Activated naive CD4-positive, alpha-beta T cell treated with anti-CD3 and anti-CD28 coated beads for 36 hours (primary cell): ENCODE measurements at regions of chr13 and their contacts with region 1.

Region 1: GRCh38 chr13:94710881-94711560 is 1.3 kb downstream of the SOX21 start:
- DNase-seq: peak; percentile 22
- H3K4me3 Mint-ChIP-seq: peak overlapping the region; percentile 48
- H3K27ac Mint-ChIP-seq: no peak overlapping the region
- H3K4me1 Mint-ChIP-seq: peaks cover 24% of the 10 kb centered on the region
- H3K27me3 Mint-ChIP-seq: peaks cover 72% of the 10 kb centered on the region

Region 2: GRCh38 chr13:94608586-94608985 is 102.4 kb before region 1 on chr13:
- CTCF ChIA-PET with region 1: no interaction called
- intact Hi-C with region 1: no loop called
- DNase-seq: no peak
- H3K4me3 Mint-ChIP-seq: no peak overlapping the region
- H3K27ac Mint-ChIP-seq: no peak overlapping the region
- H3K4me1 Mint-ChIP-seq: peaks cover 33% of the 10 kb centered on the region
- H3K27me3 Mint-ChIP-seq: no peaks in the 10 kb centered on the region

Region 3: GRCh38 chr13:94620286-94620896 is 90.6 kb before region 1 on chr13:
- CTCF ChIA-PET with region 1: interaction called, 4 read pairs
- intact Hi-C with region 1: loop called (anchors 2 kb)
- DNase-seq: peak; percentile 41
- H3K4me3 Mint-ChIP-seq: no peak overlapping the region
- H3K27ac Mint-ChIP-seq: no peak overlapping the region
- H3K4me1 Mint-ChIP-seq: peaks cover 7% of the 10 kb centered on the region
- H3K27me3 Mint-ChIP-seq: no peaks in the 10 kb centered on the region

Region 4: DNA sequence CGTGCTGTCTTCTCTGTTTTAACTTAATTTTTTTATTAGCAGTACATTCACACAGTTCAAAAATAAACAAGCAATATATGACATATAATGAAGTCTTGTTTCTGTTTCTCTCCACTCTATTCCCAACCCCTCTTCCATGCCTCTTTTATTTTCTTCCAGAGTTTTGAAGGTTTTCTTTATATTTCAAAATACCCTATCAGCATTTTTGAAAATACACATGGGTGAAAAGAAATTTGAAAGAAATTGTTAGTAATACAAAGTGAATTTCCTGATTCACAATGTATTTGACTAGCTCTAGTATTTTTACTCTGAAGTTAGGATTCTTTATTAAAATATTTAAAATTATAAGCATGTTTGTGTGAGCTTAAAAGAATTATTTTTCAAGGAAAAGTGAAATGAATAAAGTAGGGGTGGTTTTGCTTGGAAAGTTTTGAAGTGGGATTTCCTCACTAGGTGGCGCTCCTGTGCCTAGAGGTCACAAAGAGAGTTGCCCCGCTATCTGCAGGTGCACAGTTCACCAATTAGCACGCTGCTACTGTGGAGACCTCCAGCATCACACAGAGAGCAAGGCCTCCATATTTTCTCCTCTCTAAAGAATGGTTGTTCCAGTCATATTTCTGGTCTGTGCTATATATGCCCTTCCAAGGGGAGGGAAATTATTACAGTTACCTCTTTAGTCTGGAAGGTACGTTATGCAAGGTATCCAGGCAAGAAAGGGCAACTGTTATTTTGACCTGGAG is 36.2 kb before region 1 on chr13:
- CTCF ChIA-PET with region 1: interaction called, 4 read pairs
- intact Hi-C with region 1: loop called (anchors 1 kb)
- DNase-seq: peak; percentile 80
- H3K4me3 Mint-ChIP-seq: no peak overlapping the region
- H3K27ac Mint-ChIP-seq: no peak overlapping the region
- H3K4me1 Mint-ChIP-seq: no peaks in the 10 kb centered on the region
- H3K27me3 Mint-ChIP-seq: peaks cover 23% of the 10 kb centered on the region

Region 5: GRCh38 chr13:95156208-95156607 is 445.2 kb after region 1 on chr13:
- CTCF ChIA-PET with region 1: no interaction called
- intact Hi-C with region 1: loop called (anchors 5 kb)
- DNase-seq: no peak
- H3K4me3 Mint-ChIP-seq: no peak overlapping the region
- H3K27ac Mint-ChIP-seq: no peak overlapping the region
- H3K4me1 Mint-ChIP-seq: peaks cover 5% of the 10 kb centered on the region
- H3K27me3 Mint-ChIP-seq: no peaks in the 10 kb centered on the region

Region 6: DNA sequence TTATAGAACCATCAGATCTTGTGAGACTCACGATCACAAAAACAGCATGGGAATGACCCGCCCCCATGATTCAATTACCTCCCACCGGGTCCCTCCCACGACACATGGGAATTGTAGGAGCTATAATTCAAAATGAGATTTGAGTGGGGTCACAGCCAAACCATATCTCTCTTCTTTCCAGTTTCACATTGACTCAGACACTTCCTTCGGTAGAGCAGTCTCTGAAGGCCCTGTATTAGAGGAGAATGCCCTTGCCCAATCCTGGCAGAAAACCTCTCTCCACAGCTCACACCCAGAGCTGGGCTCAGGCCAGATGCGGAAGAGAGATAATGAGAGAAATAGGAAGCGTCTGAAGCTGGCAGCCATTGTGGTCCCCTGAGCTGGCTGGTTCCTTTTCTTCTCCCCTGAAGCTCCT is 769.1 kb after region 1 on chr13:
- CTCF ChIA-PET with region 1: interaction called, 3 read pairs
- intact Hi-C with region 1: loop called (anchors 5 kb)
- DNase-seq: peak; percentile 27
- H3K4me3 Mint-ChIP-seq: no peak overlapping the region
- H3K27ac Mint-ChIP-seq: no peak overlapping the region
- H3K4me1 Mint-ChIP-seq: peaks cover 10% of the 10 kb centered on the region
- H3K27me3 Mint-ChIP-seq: peaks cover 3% of the 10 kb centered on the region